HEK293 (cell line): ENCODE measurements at regions of chr6 and their contacts with region 1.

Region 1: GRCh38 chr6:33744001-33744848 is 2.5 kb downstream of the IP6K3 start:
- H3K4me3 ChIP-seq: no peak overlapping the region
- H3K27ac ChIP-seq: peak overlapping the region; percentile 67; the same call in 1 of the 2 replicates
- H3K4me1 ChIP-seq: peaks cover 21% of the 10 kb centered on the region
- CTCF ChIP-seq: peak; percentile 98

Region 2: GRCh38 chr6:33549904-33550303 is 194.3 kb before region 1 on chr6:
- CTCF ChIA-PET with region 1: no interaction called
- POLR2A ChIA-PET with region 1: no interaction called
- H3K4me3 ChIP-seq: no peak overlapping the region
- H3K27ac ChIP-seq: no peak overlapping the region
- H3K4me1 ChIP-seq: peaks cover 2% of the 10 kb centered on the region; the same call in 1 of the 2 replicates
- CTCF ChIP-seq: no peak

Region 3: GRCh38 chr6:33579828-33580714 is 164.2 kb before region 1 on chr6 and contains the start of gene BAK1:
- CTCF ChIA-PET with region 1: interaction called, 12 read pairs
- POLR2A ChIA-PET with region 1: no interaction called
- H3K4me3 ChIP-seq: peak within 1 kb of the TSS; percentile 90
- H3K27ac ChIP-seq: peak within 1 kb of the TSS; percentile 71; the same call in 1 of the 2 replicates
- H3K4me1 ChIP-seq: no peaks in the 10 kb centered on the region; the same call in 1 of the 2 replicates
- CTCF ChIP-seq: peak; percentile 89

Region 4: DNA sequence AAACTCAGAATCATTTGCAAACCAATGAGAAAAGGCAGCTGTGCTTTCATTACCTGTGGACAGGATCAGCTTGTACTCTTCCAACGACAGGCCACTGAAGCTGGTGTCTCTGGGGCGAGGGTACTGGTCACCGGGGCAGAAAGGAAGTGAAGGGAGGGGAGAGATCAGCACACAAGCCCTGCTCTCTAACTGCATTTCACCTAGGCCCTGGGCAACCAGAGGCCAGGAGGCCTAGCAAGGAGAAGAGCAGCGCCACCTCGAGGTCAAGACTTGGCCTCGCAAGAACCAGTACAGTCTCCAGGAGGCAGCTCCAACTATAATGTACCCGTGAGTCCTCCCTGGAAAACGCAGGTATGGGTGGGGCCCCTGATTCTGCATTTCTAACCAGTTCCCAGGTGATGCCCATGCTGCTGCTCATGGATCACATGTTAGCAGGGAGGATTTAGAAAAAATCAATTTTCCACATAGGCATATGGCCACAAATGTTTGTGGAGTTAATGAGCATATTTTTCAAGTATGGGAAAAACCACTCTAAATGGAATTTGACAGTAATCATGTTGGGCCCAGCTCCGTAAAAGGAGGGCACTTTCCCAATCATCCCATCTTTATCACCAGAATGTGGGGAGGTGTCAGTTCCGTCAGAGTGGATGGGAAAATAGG is 43.7 kb before region 1 on chr6:
- CTCF ChIA-PET with region 1: interaction called, 11 read pairs
- POLR2A ChIA-PET with region 1: no interaction called
- H3K4me3 ChIP-seq: no peak overlapping the region
- H3K27ac ChIP-seq: no peak overlapping the region
- H3K4me1 ChIP-seq: peaks cover 5% of the 10 kb centered on the region; the same call in 1 of the 2 replicates
- CTCF ChIP-seq: peak; percentile 67; the same call in 1 of the 2 replicates

Region 5: GRCh38 chr6:33717934-33718455 is 26.2 kb before region 1 on chr6:
- CTCF ChIA-PET with region 1: interaction called, 18 read pairs
- POLR2A ChIA-PET with region 1: no interaction called
- H3K4me3 ChIP-seq: no peak overlapping the region
- H3K27ac ChIP-seq: no peak overlapping the region
- H3K4me1 ChIP-seq: no peaks in the 10 kb centered on the region
- CTCF ChIP-seq: no peak

Region 6: DNA sequence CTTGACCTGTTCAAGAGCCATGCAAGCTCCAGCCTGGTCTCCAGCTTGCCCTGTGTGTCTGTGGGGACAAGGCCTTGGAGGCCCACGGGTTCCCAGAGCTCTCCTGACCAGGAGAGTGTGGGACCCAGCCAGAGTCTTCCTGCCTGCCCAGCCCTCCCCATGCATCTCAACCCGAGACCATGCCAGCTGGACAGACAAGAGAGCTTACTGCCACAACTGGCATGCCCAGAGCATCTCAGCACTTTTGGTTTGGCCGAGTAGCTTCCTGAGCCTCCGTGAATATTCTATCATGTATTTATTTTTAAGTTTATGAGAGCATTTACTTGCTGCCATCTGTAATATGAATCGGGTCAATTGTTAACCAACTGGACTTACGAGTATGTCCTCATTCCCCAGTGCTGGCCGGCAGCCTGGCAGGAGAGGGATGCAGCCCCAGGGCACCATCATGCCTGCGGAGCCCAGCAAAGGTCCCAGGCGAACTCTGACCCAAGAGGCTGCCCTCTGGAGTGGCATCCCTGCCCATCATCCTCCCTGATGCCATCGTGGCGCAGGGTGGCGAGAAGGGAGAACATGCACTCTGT is 12.4 kb before region 1 on chr6:
- CTCF ChIA-PET with region 1: interaction called, 27 read pairs
- POLR2A ChIA-PET with region 1: no interaction called
- H3K4me3 ChIP-seq: no peak overlapping the region
- H3K27ac ChIP-seq: no peak overlapping the region
- H3K4me1 ChIP-seq: no peaks in the 10 kb centered on the region
- CTCF ChIP-seq: no peak

Region 7: GRCh38 chr6:33771146-33772081 is 27.2 kb after region 1 on chr6:
- CTCF ChIA-PET with region 1: interaction called, 149 read pairs
- POLR2A ChIA-PET with region 1: interaction called, 3 read pairs
- H3K4me3 ChIP-seq: no peak overlapping the region
- H3K27ac ChIP-seq: no peak overlapping the region
- H3K4me1 ChIP-seq: peaks cover 5% of the 10 kb centered on the region
- CTCF ChIP-seq: peak; percentile 91

Region 8: GRCh38 chr6:34154668-34155447 is 410.6 kb after region 1 on chr6:
- CTCF ChIA-PET with region 1: interaction called, 31 read pairs
- POLR2A ChIA-PET with region 1: no interaction called
- H3K4me3 ChIP-seq: peak overlapping the region; percentile 20
- H3K27ac ChIP-seq: no peak overlapping the region
- H3K4me1 ChIP-seq: no peaks in the 10 kb centered on the region
- CTCF ChIP-seq: peak; percentile 95